AG04450 (cell line): ENCODE measurements at regions of chr12 and their contacts with region 1.

Region 1: GRCh38 chr12:6927379-6928024 is at the start of gene ATN1:
- DNase-seq: peak; percentile 47
- H3K4me3 ChIP-seq: peak within 1 kb of the TSS; percentile 68
- H3K27ac ChIP-seq: peak within 1 kb of the TSS; percentile 90
- H3K27me3 ChIP-seq: no peaks in the 10 kb centered on the region
- CTCF ChIP-seq: no peak
- polyA plus RNA-seq, gene ATN1: 11.2 and 21.4 TPM in 2 replicates

Region 2: GRCh38 chr12:6890789-6891645 is 36.5 kb before region 1 on chr12:
- CTCF ChIA-PET with region 1: interaction called, 12 read pairs
- POLR2A ChIA-PET with region 1: interaction called, 11 read pairs
- DNase-seq: peak; percentile 91
- H3K4me3 ChIP-seq: peak overlapping the region; percentile 59
- H3K27ac ChIP-seq: peak overlapping the region; percentile 94
- H3K27me3 ChIP-seq: no peaks in the 10 kb centered on the region
- CTCF ChIP-seq: peak; percentile 70

Region 3: DNA sequence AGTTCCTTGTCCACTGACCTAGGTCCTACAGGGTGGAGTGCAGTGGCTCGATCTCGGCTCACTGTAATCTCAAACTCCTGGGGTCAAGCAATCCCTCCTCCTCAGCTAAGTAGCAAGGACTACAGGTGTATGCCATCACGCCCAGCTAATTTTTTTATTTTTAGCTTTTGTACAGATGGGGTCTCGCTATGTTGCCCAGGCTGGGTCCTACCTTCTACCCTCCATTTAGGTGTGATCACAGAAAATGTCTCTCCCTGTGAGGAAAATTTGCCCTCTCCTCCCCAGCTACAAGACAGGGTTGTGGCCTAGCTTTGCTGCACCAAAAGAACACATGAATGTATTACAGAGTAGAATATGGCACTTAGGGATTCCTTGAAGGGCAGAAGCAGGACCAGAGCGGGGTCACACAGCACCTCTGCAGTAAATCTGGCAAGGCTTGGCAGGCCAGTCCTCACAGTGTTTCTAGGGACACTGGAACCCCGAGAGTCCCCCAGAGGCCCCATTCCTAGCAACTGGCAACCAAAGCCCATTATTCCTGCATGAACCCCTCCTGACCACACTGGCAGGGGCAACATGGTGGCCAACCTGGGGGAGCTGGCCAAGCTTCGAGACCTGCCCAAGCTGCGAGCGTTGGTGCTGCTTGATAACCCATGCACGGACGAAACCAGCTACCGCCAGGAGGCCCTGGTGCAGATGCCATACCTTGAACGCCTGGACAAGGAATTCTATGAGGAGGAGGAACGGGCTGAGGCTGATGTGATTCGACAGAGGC is 15.2 kb before region 1 on chr12:
- CTCF ChIA-PET with region 1: interaction called, 23 read pairs
- POLR2A ChIA-PET with region 1: interaction called, 4 read pairs
- DNase-seq: no peak
- H3K4me3 ChIP-seq: no peak overlapping the region
- H3K27ac ChIP-seq: no peak overlapping the region
- H3K27me3 ChIP-seq: no peaks in the 10 kb centered on the region
- CTCF ChIP-seq: no peak

Region 4: GRCh38 chr12:6944381-6945186 is 17.1 kb after region 1 on chr12:
- CTCF ChIA-PET with region 1: interaction called, 33 read pairs
- POLR2A ChIA-PET with region 1: interaction called, 36 read pairs
- DNase-seq: peak; percentile 88
- H3K4me3 ChIP-seq: peak overlapping the region; percentile 79
- H3K27ac ChIP-seq: peak overlapping the region; percentile 94
- H3K27me3 ChIP-seq: no peaks in the 10 kb centered on the region
- CTCF ChIP-seq: peak; percentile 83